Sciatic nerve (tissue), 2 donors: ENCODE measurements at regions of chr20 and their contacts with region 1.

Region 1: DNA sequence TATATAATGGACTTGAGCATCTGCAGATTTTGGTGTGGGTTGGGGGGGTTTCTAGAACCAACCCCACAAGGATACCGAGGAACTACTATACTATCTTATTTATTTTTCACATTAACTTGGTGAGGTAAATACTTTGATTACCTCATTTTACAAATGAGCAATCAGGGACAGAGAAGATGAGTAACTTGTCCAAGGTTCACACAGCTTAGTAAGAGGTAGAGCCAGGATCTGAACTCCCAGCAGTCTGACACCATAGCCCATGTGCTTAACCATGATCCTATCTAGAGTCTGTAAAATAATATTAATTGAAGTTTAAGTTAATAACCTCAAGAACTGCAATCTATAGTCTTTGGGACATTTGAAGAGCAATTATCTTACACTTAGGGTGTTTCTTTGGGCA is 28.6 kb downstream of the DHX35 start:
- DNase-seq: no peak
- ATAC-seq: no peak

Region 2: GRCh38 chr20:38970302-38970701 is 20.4 kb before region 1 on chr20:
- intact Hi-C with region 1: loop called (anchors 1 kb)
- DNase-seq: no peak
- ATAC-seq: no peak